ENCODE measurements at regions of chr16 and their contacts with region 1.

Region 1: DNA sequence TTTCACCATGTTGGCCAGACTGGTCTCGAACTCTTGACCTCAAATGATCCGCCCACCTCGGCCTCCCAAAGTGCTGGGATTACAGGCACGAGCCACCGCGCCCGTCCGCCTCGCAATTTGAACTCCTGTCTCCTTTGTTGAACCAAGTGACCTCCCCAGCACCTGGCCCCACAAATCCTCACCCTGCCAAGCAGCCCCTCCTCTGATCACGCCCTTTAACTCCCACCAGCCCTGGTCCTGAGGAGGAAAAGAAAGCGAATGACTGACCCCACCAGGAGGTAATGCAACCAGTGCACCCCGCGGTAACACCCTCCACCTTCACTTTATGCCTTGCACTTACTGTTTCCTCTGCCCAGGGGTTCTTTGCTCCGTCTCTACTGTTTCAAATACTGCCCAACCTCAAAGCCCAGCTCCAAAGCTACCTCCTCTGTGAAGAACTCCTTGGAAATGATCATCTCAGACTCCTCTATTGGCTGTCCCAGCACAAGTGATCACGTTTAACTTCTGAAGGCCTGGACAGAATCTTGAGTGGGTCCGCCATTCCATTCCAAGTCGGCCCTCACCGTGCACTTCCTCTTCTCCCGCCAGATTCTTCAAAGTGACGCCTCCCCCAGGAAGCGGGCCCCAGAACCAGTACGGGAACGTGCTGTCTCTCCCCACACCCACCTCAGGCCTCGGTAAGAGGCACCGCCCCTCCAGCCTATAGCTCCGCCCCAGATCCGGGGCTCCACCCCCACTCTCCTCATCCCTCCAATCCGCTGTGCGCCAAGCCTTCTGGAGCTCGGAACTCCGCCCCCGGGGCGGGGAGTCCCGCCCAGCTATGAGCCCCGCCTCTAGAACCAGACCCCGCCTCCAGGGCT is 4.4 kb downstream of the CD19 start:
- DNase-seq: peak; percentile 72 to 93 (median 84)
- ATAC-seq: peak; percentile 86 to 98 (median 97)
- H3K4me3 ChIP-seq: peak overlapping the region in 9 of 12 donors; percentile 12 to 48 (median 28)
- H3K27ac ChIP-seq: no peak overlapping the region
- H3K4me1 ChIP-seq: peaks cover 0 to 12% (median 0%) of the 10 kb centered on the region in 12 donors
- H3K27me3 ChIP-seq: no peaks in the 10 kb centered on the region
- CTCF ChIP-seq: no peak
- POLR2A ChIP-seq: no peak

Region 2: DNA sequence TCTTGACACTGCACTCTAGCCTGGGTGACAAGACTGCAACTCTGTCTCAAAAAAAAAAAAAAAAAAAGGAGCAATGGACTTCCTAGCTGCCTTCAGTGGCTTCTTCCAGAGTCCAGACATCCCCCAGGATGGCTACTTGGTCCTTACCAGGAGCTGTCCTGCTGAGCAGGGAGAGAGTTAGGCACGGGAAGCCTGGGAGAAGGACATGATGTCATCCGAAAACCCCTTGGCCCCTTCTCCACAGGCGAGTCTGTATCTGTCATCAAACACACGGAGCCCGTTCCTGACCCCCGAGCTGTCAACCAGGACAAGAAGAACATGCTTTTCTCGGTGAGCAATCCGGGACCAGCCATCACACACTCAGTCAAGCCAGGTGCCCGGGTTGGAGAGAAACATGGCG is 49.2 kb before region 1 on chr16:
- intact Hi-C with region 1: loop called in 2 of 10 experiments (anchors 5 kb)
- DNase-seq: no peak
- ATAC-seq: no peak
- H3K4me3 ChIP-seq: no peak overlapping the region
- H3K27ac ChIP-seq: no peak overlapping the region
- H3K4me1 ChIP-seq: no peaks in the 10 kb centered on the region
- H3K27me3 ChIP-seq: peaks cover 0 to 10% (median 0%) of the 10 kb centered on the region in 9 donors
- CTCF ChIP-seq: no peak
- POLR2A ChIP-seq: no peak